ENCODE measurements at regions of chr11 and their contacts with region 1.

Region 1: GRCh38 chr11:16613512-16614381 is 124.7 kb upstream of the C11orf58 start:
- DNase-seq: peak; percentile 89 to 92
- ATAC-seq: peak; percentile 95 to 98 (median 97)
- H3K4me3 ChIP-seq: peak overlapping the region; percentile 26 to 68 (median 57)
- H3K27ac ChIP-seq: peak overlapping the region; percentile 57 to 90 (median 80)
- H3K4me1 ChIP-seq: peaks cover 0 to 26% (median 9%) of the 10 kb centered on the region in 9 donors
- H3K27me3 ChIP-seq: peaks cover 0 to 100% (median 11%) of the 10 kb centered on the region in 7 donors
- CTCF ChIP-seq: peak; percentile 78 to 97 (median 91)

Region 2: GRCh38 chr11:15327786-15328231 is 1285.9 kb before region 1 on chr11:
- intact Hi-C with region 1: loop called (anchors 5 to 10 kb)
- DNase-seq: peak; percentile 25 to 50
- ATAC-seq: peak; percentile 71 to 92 (median 78)
- H3K4me3 ChIP-seq: no peak overlapping the region
- H3K27ac ChIP-seq: no peak overlapping the region
- H3K4me1 ChIP-seq: no peaks in the 10 kb centered on the region
- H3K27me3 ChIP-seq: no peaks in the 10 kb centered on the region
- CTCF ChIP-seq: peak; percentile 45 to 79 (median 71)

Region 3: DNA sequence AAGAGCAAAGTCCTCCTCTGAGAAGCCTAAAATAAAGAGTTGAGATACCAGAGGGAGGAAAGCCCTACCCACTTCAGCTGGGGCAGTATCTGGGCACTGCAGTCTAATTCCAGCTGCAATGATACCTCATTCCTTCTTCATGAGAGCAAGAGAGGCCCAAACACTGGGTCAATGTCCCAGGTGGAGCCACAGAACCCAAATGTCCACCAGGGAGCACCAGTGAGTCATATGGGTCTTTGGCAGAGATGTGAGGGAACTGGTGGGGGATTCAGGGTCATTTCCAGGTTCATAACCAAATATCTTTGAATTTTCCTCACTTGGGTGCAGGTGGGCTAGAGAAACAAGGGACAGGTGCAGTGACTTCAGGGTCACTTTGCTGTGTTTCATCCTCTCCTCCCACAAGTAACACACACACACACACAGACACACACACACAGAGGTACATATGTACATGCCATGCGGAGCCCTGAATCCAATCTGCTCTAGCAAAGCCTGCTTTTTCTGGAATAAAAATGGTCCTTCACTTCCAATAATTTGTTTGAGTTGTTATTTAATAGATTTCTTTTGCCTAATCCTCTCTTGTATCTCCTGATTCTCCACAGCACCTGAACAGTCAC is 842.8 kb before region 1 on chr11:
- intact Hi-C with region 1: loop called in 4 of 10 experiments (anchors 2 to 5 kb)
- DNase-seq: peak in 1 of 2 donors; percentile 52
- ATAC-seq: no peak
- H3K4me3 ChIP-seq: no peak overlapping the region
- H3K27ac ChIP-seq: no peak overlapping the region
- H3K4me1 ChIP-seq: peaks cover 0 to 27% (median 9%) of the 10 kb centered on the region in 9 donors
- H3K27me3 ChIP-seq: peaks cover 0 to 3% (median 0%) of the 10 kb centered on the region in 7 donors
- CTCF ChIP-seq: peak; percentile 28 to 76 (median 64)

Region 4: DNA sequence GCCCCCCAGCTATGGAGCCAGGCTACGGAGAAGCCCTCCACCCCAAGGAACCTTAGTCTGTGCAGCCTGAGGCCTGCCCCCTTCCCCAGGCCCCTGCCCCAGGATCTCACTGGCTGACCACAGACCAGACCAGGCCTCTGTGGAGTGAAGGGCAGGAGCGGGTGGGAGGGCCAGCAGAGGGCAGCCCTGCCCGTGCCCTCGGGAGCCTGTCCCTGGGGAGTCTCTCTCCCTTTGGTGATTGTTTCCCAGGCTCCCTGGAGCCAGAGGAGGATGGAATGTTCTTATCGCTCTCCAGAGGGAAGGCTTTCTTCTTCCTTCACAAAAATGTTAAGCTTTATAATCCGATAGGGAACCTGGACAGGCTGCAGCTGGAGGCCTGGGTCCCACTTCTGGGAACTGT is 712.7 kb before region 1 on chr11:
- intact Hi-C with region 1: loop called in 2 of 10 experiments (anchors 5 kb)
- DNase-seq: peak; percentile 21 to 45
- ATAC-seq: peak; percentile 44 to 85 (median 80)
- H3K4me3 ChIP-seq: no peak overlapping the region
- H3K27ac ChIP-seq: no peak overlapping the region
- H3K4me1 ChIP-seq: peaks cover 0 to 17% (median 11%) of the 10 kb centered on the region in 9 donors
- H3K27me3 ChIP-seq: no peaks in the 10 kb centered on the region
- CTCF ChIP-seq: peak in 8 of 9 donors; percentile 12 to 61 (median 50)

Region 5: DNA sequence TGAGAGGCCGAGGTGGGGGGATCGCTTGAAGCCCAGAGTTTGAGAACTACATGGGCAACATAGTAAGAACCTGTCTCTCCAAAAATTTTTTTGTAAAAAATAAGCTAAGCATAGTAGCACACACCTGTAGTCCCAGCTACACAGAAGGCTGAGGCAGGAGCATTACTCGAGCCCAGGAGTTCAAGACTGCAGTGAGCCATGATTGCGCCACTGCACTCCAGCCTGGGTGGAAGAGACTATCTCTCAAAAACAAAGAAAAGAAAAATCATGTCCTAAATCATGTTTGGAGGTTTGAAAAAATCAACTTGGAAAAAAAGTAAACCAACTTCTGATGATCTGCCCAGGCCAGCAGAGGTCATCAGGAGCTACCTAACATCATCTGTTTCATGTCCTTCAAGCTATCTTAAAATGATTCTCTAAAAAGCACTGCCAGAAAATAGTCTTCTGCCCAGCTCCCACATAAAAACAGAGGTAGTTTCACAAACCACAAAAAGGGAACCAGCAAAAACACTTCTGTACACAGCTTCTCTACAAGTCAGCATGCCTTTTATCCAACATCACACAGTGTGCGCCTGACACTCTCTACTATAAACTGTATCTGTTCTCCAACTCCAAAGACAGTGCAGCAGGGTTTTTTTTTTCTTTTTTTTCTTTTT is 422.4 kb before region 1 on chr11:
- intact Hi-C with region 1: loop called in 6 of 10 experiments (anchors 5 to 10 kb)
- DNase-seq: no peak
- ATAC-seq: peak in 4 of 8 donors; percentile 20 to 39 (median 26)
- H3K4me3 ChIP-seq: no peak overlapping the region
- H3K27ac ChIP-seq: peak overlapping the region in 1 of 10 donors; percentile 4
- H3K4me1 ChIP-seq: peaks cover 0 to 41% (median 34%) of the 10 kb centered on the region in 9 donors
- H3K27me3 ChIP-seq: no peaks in the 10 kb centered on the region
- CTCF ChIP-seq: peak in 4 of 9 donors; percentile 36 to 56 (median 45)

Region 6: GRCh38 chr11:16558494-16558893 is 55.3 kb before region 1 on chr11:
- intact Hi-C with region 1: no loop called
- DNase-seq: no peak
- ATAC-seq: no peak
- H3K4me3 ChIP-seq: no peak overlapping the region
- H3K27ac ChIP-seq: no peak overlapping the region
- H3K4me1 ChIP-seq: peaks cover 0 to 50% (median 9%) of the 10 kb centered on the region in 9 donors
- H3K27me3 ChIP-seq: no peaks in the 10 kb centered on the region
- CTCF ChIP-seq: no peak